CD4-positive, alpha-beta T cell (primary cell): ENCODE measurements at regions of chr17 and their contacts with region 1.

Region 1: DNA sequence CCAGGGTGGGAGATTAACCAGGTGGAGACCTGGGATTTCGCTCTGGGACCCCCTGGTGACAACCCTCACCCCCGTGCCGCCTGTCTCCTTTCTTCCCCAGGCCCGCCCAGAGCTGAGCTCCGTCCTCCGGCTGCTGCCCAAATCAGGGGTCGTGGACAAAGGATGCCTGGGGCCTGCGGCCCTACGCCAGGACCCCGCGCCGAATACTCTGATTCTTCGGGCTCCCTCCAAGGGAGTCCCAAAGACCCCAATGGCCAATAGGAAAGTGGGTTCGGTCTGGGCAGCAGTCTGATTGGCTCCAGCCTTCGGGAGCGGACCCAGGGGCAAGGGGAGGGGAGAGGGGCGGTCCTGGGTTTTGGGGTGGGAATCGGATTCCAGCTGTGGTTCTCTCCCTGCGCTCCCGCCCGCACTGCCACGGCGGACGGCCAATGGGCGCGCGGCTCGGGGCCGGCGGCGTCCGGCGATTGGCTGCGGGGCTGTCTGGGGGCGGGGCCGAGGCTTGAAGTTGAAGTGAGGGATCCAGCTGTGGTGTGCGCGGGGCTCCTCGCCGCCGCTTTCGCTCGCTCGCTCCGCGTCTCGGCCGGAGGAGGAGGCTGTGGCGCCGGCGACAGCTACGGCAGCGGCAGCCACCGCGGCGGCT is at the start of gene CACNA1G:
- DNase-seq: peak; percentile 70 to 93 (median 84)
- ATAC-seq: peak; percentile 85
- H3K4me3 ChIP-seq: peak within 1 kb of the TSS; percentile 60
- H3K4me3 Mint-ChIP-seq: peak within 1 kb of the TSS; percentile 85
- H3K27ac ChIP-seq: no peak within 1 kb of the TSS
- H3K27ac Mint-ChIP-seq: no peak within 1 kb of the TSS
- H3K4me1 ChIP-seq: peaks cover 44% of the 10 kb centered on the region
- H3K4me1 Mint-ChIP-seq: peaks cover 33% of the 10 kb centered on the region
- H3K27me3 ChIP-seq: peaks cover 60 to 66% of the 10 kb centered on the region in 2 experiments
- H3K27me3 Mint-ChIP-seq: peaks cover 77% of the 10 kb centered on the region
- CTCF ChIP-seq: no peak
- total RNA-seq, gene CACNA1G: not detected

Region 2: GRCh38 chr17:50425682-50426471 is 134.4 kb before region 1 on chr17 and contains the start of gene ACSF2:
- CTCF ChIA-PET with region 1: no interaction called
- POLR2A ChIA-PET with region 1: no interaction called
- intact Hi-C with region 1: loop called in 1 of 2 experiments (anchors 5 kb)
- DNase-seq: peak; percentile 43 to 82 (median 65)
- ATAC-seq: peak; percentile 88
- H3K4me3 ChIP-seq: peak within 1 kb of the TSS; percentile 79
- H3K4me3 Mint-ChIP-seq: peak within 1 kb of the TSS; percentile 87
- H3K27ac ChIP-seq: peak within 1 kb of the TSS; percentile 51 to 63
- H3K27ac Mint-ChIP-seq: peak within 1 kb of the TSS; percentile 70
- H3K4me1 ChIP-seq: peaks cover 36% of the 10 kb centered on the region
- H3K4me1 Mint-ChIP-seq: peaks cover 45% of the 10 kb centered on the region
- H3K27me3 ChIP-seq: no peaks in the 10 kb centered on the region
- H3K27me3 Mint-ChIP-seq: no peaks in the 10 kb centered on the region
- CTCF ChIP-seq: no peak
- total RNA-seq, gene ACSF2: 11.9 to 13.9 TPM

Region 3: GRCh38 chr17:50518384-50519230 is 41.7 kb before region 1 on chr17:
- CTCF ChIA-PET with region 1: no interaction called
- POLR2A ChIA-PET with region 1: no interaction called
- intact Hi-C with region 1: no loop called
- DNase-seq: no peak
- ATAC-seq: no peak
- H3K4me3 ChIP-seq: no peak overlapping the region
- H3K4me3 Mint-ChIP-seq: no peak overlapping the region
- H3K27ac ChIP-seq: no peak overlapping the region
- H3K27ac Mint-ChIP-seq: no peak overlapping the region
- H3K4me1 ChIP-seq: peaks cover 9% of the 10 kb centered on the region
- H3K4me1 Mint-ChIP-seq: peaks cover 8% of the 10 kb centered on the region
- H3K27me3 ChIP-seq: no peaks in the 10 kb centered on the region
- H3K27me3 Mint-ChIP-seq: no peaks in the 10 kb centered on the region
- CTCF ChIP-seq: no peak

Region 4: GRCh38 chr17:50541716-50542688 is 18.3 kb before region 1 on chr17:
- CTCF ChIA-PET with region 1: interaction called, 5 read pairs
- POLR2A ChIA-PET with region 1: interaction called, 19 read pairs
- intact Hi-C with region 1: no loop called
- DNase-seq: peak; percentile 61 to 91 (median 79)
- ATAC-seq: peak; percentile 84
- H3K4me3 ChIP-seq: peak overlapping the region; percentile 65
- H3K4me3 Mint-ChIP-seq: peak overlapping the region; percentile 78
- H3K27ac ChIP-seq: no peak overlapping the region
- H3K27ac Mint-ChIP-seq: no peak overlapping the region
- H3K4me1 ChIP-seq: peaks cover 28% of the 10 kb centered on the region
- H3K4me1 Mint-ChIP-seq: peaks cover 22% of the 10 kb centered on the region
- H3K27me3 ChIP-seq: no peaks in the 10 kb centered on the region
- H3K27me3 Mint-ChIP-seq: peaks cover 6% of the 10 kb centered on the region
- CTCF ChIP-seq: peak; percentile 21